ENCODE measurements at regions of chr1 and their contacts with region 1.

Region 1: GRCh38 chr1:26999440-26999987 is 6.0 kb downstream of the TRNP1 start:
- DNase-seq: no peak
- CTCF ChIP-seq: no peak

Region 2: DNA sequence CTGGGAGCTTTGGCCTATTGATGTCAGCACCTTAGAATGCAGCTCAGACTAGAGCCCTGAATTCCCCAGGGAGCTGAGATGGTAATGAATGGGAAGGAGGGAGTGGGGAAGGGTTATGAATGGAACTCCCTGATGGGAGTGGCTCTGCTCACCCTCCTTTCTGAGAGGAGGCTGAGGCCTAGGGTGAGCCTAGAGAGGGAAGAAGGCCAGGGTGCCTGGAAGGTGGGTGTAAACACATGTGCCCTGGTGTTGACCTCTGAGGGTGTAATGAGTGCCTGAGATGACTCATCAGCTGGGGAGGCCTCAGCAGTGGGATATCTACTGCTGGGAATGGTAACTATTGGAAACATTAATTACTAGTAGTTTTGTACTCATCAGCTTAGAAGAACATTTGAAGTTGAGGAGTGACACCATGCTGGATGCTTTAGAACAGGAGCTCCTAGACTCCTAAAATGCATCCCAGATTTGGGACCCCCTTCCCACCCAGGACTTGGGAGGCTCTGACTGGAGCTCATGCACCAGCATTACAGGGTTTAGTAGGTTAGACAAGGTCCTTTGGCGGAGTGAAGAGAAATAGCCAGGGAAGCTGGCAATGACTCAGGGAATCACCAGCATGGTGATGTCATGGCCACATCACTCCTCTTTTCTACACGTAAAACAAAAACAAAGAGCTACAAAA is 227.7 kb before region 1 on chr1:
- CTCF ChIA-PET with region 1: no interaction called
- POLR2A ChIA-PET with region 1: no interaction called
- DNase-seq: peak; percentile 44
- CTCF ChIP-seq: no peak

Region 3: GRCh38 chr1:26894263-26894662 is 105.3 kb before region 1 on chr1:
- CTCF ChIA-PET with region 1: no interaction called
- POLR2A ChIA-PET with region 1: no interaction called
- DNase-seq: no peak
- CTCF ChIP-seq: no peak

Region 4: DNA sequence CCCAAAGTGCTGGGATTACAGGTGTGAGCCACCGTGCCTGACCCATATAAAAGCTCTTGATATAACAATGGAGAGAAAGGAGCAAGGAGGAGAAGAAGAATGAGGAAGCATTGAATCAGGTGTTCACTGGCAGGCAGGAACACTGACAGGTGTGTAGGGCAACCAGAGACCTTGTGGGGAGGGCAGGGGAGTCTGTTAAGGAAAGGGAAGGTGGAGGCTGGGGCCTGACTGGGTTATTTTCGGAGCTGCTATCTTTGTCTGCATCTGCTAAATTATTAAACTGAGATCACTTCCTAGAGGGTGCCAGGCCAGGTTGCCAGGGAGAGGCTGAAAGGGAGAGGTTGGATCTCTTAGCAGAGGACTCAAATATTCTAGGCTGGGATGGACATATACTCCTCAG is 12.9 kb before region 1 on chr1:
- CTCF ChIA-PET with region 1: interaction called, 22 read pairs
- POLR2A ChIA-PET with region 1: interaction called, 10 read pairs
- DNase-seq: no peak
- CTCF ChIP-seq: no peak

Region 5: DNA sequence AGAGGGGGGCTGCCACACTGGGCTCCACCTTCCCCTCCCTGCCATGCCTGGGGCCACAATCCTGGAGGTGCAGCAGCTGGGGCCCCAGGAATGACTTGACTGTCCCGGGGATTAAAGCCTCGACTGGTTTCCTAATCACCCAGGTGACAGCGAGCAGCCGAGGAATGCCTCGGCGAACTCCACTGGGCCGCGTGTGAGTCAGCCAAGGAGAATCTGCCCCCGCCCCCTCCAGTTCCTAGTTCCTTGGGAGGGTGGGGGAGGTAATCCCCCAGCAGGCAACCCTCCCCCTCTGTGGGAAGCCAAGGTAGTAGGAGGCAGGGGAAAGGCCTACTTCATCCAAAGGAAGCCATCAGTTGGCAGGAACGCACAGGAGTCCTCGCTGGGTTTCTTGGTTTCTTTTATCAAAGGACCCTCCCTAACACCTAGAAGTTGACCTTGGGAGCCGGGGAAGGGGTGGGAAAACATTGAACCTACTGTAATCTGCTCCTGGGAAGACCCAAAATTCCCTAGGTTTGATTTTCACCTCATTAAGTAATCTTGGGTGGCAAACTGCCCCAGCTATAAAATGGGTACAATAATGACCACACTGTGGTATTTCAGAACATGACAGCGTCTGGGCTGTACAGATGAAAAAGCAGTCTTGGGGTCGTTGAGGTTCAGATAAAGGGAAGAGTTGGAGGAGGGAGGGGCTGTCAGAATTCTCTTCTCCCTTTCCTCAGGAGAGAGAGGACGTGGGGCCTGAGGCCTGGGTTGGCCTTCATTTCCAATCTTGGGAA is 11.7 kb after region 1 on chr1:
- CTCF ChIA-PET with region 1: interaction called, 34 read pairs
- POLR2A ChIA-PET with region 1: no interaction called
- DNase-seq: no peak
- CTCF ChIP-seq: no peak

Region 6: DNA sequence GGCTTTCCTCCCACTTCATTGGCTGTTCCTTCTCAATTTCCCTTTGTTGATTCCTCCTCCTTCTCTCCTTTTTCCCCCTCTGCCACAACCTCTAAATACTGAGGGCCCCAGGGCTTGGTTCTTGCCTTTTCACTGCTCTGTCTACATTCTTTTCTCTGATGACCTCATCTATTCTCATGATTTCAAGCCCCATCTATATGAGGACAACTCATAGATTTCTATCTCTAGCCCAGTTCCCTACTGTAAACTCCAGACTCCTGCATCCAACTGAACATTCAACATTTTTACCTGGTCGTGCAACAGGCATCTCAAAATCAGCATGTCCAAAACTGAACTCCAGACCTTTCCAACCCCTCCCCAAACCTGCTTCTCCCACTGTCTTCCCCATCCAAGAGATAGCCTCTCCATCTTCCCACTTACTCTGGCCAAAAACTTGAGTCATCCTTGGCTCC is 166.9 kb after region 1 on chr1:
- CTCF ChIA-PET with region 1: no interaction called
- POLR2A ChIA-PET with region 1: no interaction called
- DNase-seq: no peak
- CTCF ChIP-seq: no peak

Measured in GM10248 (cell line).